Activated CD8-positive, alpha-beta T cell treated with anti-CD3 and anti-CD28 coated beads for 36 hours (primary cell): ENCODE measurements at regions of chr2 and their contacts with region 1.

Region 1: DNA sequence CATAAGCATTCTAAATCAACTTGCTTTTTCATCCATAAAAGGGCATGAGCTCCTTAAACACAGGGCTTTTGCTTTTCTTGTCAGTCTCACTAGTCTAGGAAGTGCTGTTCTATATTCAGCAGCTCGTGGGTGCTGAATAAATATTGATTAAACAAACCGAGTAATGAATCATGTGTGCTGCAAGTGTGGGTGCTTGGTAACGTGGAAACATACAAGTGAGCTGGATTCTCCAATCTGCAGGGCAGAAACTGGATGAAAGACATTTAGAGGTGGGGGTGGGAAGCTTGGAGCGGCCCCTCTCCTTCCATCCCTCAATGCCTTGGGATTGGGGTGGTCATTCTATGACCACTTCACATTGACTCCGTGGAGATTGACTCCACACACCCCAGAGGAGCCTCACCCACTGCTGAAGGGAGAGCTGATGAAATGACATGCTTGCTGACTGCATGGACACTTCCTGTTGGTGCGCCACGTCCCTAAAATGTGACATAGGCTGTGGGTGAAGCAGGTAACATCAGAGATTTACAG is 114.6 kb downstream of the DOCK10 start:
- DNase-seq: peak; percentile 88
- ATAC-seq: peak; percentile 64
- H3K4me3 Mint-ChIP-seq: peak overlapping the region; percentile 42
- H3K27ac Mint-ChIP-seq: peak overlapping the region; percentile 94
- H3K4me1 Mint-ChIP-seq: peaks cover 95% of the 10 kb centered on the region
- H3K27me3 Mint-ChIP-seq: no peaks in the 10 kb centered on the region
- CTCF ChIP-seq: no peak

Region 2: GRCh38 chr2:223944703-223945531 is 982.8 kb before region 1 on chr2 and contains the start of gene WDFY1:
- CTCF ChIA-PET with region 1: no interaction called
- POLR2A ChIA-PET with region 1: no interaction called
- intact Hi-C with region 1: loop called (anchors 5 kb)
- DNase-seq: peak; percentile 88
- ATAC-seq: peak; percentile 66
- H3K4me3 Mint-ChIP-seq: peak within 1 kb of the TSS; percentile 92
- H3K27ac Mint-ChIP-seq: peak within 1 kb of the TSS; percentile 93
- H3K4me1 Mint-ChIP-seq: peaks cover 48% of the 10 kb centered on the region
- H3K27me3 Mint-ChIP-seq: no peaks in the 10 kb centered on the region
- CTCF ChIP-seq: no peak
- total RNA-seq, gene WDFY1: 20.8 to 23.1 TPM

Region 3: DNA sequence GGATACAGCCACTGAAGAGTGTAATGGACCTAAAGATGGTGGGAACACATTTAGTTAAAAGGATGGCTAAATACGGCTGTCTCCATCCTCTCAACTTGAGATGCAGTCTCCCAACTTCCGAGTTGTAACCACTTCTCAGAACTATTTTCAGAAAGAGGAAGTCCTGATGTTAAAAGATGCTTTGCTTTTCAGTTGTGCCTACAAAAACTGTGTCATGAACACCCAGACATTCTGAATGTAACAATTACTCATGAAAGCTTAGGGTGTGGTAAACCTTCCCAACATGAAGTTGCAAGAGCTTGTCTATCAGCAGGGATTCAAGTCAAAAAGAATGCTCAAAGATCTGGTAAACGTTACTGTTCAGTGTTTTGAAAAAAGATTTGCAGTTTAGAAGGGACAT is 33.4 kb before region 1 on chr2:
- CTCF ChIA-PET with region 1: no interaction called
- POLR2A ChIA-PET with region 1: no interaction called
- intact Hi-C with region 1: loop called (anchors 5 kb)
- DNase-seq: no peak
- ATAC-seq: peak; percentile 33
- H3K4me3 Mint-ChIP-seq: peak overlapping the region; percentile 32
- H3K27ac Mint-ChIP-seq: peak overlapping the region; percentile 93
- H3K4me1 Mint-ChIP-seq: peaks cover 66% of the 10 kb centered on the region
- H3K27me3 Mint-ChIP-seq: no peaks in the 10 kb centered on the region
- CTCF ChIP-seq: no peak

Region 4: GRCh38 chr2:224938651-224939182 is 11.0 kb after region 1 on chr2:
- CTCF ChIA-PET with region 1: interaction called, 27 read pairs
- POLR2A ChIA-PET with region 1: interaction called, 154 read pairs
- intact Hi-C with region 1: loop called (anchors 1 kb)
- DNase-seq: peak; percentile 71
- ATAC-seq: peak; percentile 79
- H3K4me3 Mint-ChIP-seq: peak overlapping the region; percentile 67
- H3K27ac Mint-ChIP-seq: peak overlapping the region; percentile 87
- H3K4me1 Mint-ChIP-seq: peaks cover 76% of the 10 kb centered on the region
- H3K27me3 Mint-ChIP-seq: no peaks in the 10 kb centered on the region
- CTCF ChIP-seq: no peak

Region 5: GRCh38 chr2:224946895-224947294 is 19.2 kb after region 1 on chr2:
- CTCF ChIA-PET with region 1: interaction called, 24 read pairs
- POLR2A ChIA-PET with region 1: interaction called, 154 read pairs
- intact Hi-C with region 1: loop called (anchors 1 kb)
- DNase-seq: no peak
- ATAC-seq: peak; percentile 50
- H3K4me3 Mint-ChIP-seq: peak overlapping the region; percentile 78
- H3K27ac Mint-ChIP-seq: peak overlapping the region; percentile 90
- H3K4me1 Mint-ChIP-seq: peaks cover 59% of the 10 kb centered on the region
- H3K27me3 Mint-ChIP-seq: no peaks in the 10 kb centered on the region
- CTCF ChIP-seq: no peak

Region 6: GRCh38 chr2:224952936-224953657 is 25.4 kb after region 1 on chr2:
- CTCF ChIA-PET with region 1: interaction called, 3 read pairs
- POLR2A ChIA-PET with region 1: interaction called, 24 read pairs
- intact Hi-C with region 1: no loop called
- DNase-seq: peak; percentile 71
- ATAC-seq: peak; percentile 83
- H3K4me3 Mint-ChIP-seq: peak overlapping the region; percentile 50
- H3K27ac Mint-ChIP-seq: peak overlapping the region; percentile 87
- H3K4me1 Mint-ChIP-seq: peaks cover 90% of the 10 kb centered on the region
- H3K27me3 Mint-ChIP-seq: no peaks in the 10 kb centered on the region
- CTCF ChIP-seq: no peak